Endothelial cell of umbilical vein (primary cell): ENCODE measurements at regions of chr2 and their contacts with region 1.

Region 1: DNA sequence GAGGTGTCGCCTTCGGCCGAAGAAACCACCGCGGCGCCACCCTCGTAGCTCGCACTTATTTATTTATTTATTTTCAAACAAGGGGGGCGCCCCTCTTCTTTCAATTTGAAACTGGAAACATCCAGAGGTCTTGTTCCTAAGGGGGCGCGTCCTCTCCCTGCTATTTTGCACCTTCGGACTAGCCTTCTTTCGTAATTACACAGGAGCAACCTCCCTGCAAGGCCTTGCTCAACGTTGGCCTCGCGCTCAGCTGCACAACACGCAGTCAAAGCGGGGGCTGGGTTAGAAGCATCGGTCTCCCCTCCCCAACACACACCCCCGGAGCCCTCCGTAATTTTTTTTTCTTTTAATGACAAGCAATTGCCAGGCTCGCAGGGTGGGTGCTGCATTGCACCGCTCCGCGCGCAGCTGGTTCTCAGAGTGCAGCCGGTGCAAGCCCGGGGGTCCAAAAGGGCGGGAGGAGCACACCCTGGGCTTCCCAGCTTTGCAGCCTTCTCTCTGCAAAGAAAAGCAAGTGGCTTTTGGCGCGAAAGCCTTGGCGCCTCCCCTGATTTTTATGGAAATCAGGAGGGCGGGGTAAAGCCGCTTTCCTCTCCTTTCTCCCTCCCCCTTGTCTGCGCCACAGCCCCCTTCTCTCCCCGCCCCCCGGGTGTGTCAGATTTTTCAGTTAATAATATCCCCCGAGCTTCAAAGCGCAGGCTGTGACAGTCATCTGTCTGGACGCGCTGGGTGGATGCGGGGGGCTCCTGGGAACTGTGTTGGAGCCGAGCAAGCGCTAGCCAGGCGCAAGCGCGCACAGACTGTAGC is at the start of gene MYCN:
- DNase-seq: peak; percentile 59
- H3K4me3 ChIP-seq: peak within 1 kb of the TSS in 2 of 3 experiments; percentile 2 to 47
- H3K27ac ChIP-seq: no peak within 1 kb of the TSS
- H3K4me1 ChIP-seq: peaks cover 13% of the 10 kb centered on the region
- H3K27me3 ChIP-seq: peaks cover 42 to 57% of the 10 kb centered on the region in 2 experiments
- CTCF ChIP-seq: no peak
- POLR2A ChIP-seq: no peak
- total RNA-seq, gene MYCN: 3.6 and 6.8 TPM in 2 replicates

Region 2: GRCh38 chr2:15704086-15704787 is 235.8 kb before region 1 on chr2:
- CTCF ChIA-PET with region 1: no interaction called
- POLR2A ChIA-PET with region 1: interaction called, 6 read pairs
- dilution Hi-C with region 1: no loop called
- intact Hi-C with region 1: loop called (anchors 2 kb)
- DNase-seq: peak; percentile 76
- H3K4me3 ChIP-seq: no peak overlapping the region
- H3K27ac ChIP-seq: peak overlapping the region; percentile 85
- H3K4me1 ChIP-seq: peaks cover 35% of the 10 kb centered on the region
- H3K27me3 ChIP-seq: no peaks in the 10 kb centered on the region
- CTCF ChIP-seq: no peak
- POLR2A ChIP-seq: no peak

Region 3: GRCh38 chr2:15912205-15912604 is 27.9 kb before region 1 on chr2:
- CTCF ChIA-PET with region 1: interaction called, 6 read pairs
- POLR2A ChIA-PET with region 1: no interaction called
- dilution Hi-C with region 1: no loop called
- intact Hi-C with region 1: loop called (anchors 1 kb)
- DNase-seq: peak; percentile 88
- H3K4me3 ChIP-seq: no peak overlapping the region
- H3K27ac ChIP-seq: no peak overlapping the region
- H3K4me1 ChIP-seq: no peaks in the 10 kb centered on the region
- H3K27me3 ChIP-seq: no peaks in the 10 kb centered on the region
- CTCF ChIP-seq: no peak
- POLR2A ChIP-seq: no peak

Region 4: GRCh38 chr2:15993232-15993610 is 53.2 kb after region 1 on chr2:
- CTCF ChIA-PET with region 1: no interaction called
- POLR2A ChIA-PET with region 1: no interaction called
- dilution Hi-C with region 1: no loop called
- intact Hi-C with region 1: no loop called
- DNase-seq: no peak
- H3K4me3 ChIP-seq: no peak overlapping the region
- H3K27ac ChIP-seq: no peak overlapping the region
- H3K4me1 ChIP-seq: no peaks in the 10 kb centered on the region
- H3K27me3 ChIP-seq: no peaks in the 10 kb centered on the region
- CTCF ChIP-seq: no peak
- POLR2A ChIP-seq: no peak

Region 5: GRCh38 chr2:16487686-16488085 is 547.6 kb after region 1 on chr2:
- CTCF ChIA-PET with region 1: interaction called, 9 read pairs
- POLR2A ChIA-PET with region 1: no interaction called
- dilution Hi-C with region 1: no loop called
- intact Hi-C with region 1: loop called (anchors 1 kb)
- DNase-seq: peak; percentile 46
- H3K4me3 ChIP-seq: no peak overlapping the region
- H3K27ac ChIP-seq: no peak overlapping the region
- H3K4me1 ChIP-seq: no peaks in the 10 kb centered on the region
- H3K27me3 ChIP-seq: no peaks in the 10 kb centered on the region
- CTCF ChIP-seq: peak; percentile 21 to 42
- POLR2A ChIP-seq: no peak

Region 6: DNA sequence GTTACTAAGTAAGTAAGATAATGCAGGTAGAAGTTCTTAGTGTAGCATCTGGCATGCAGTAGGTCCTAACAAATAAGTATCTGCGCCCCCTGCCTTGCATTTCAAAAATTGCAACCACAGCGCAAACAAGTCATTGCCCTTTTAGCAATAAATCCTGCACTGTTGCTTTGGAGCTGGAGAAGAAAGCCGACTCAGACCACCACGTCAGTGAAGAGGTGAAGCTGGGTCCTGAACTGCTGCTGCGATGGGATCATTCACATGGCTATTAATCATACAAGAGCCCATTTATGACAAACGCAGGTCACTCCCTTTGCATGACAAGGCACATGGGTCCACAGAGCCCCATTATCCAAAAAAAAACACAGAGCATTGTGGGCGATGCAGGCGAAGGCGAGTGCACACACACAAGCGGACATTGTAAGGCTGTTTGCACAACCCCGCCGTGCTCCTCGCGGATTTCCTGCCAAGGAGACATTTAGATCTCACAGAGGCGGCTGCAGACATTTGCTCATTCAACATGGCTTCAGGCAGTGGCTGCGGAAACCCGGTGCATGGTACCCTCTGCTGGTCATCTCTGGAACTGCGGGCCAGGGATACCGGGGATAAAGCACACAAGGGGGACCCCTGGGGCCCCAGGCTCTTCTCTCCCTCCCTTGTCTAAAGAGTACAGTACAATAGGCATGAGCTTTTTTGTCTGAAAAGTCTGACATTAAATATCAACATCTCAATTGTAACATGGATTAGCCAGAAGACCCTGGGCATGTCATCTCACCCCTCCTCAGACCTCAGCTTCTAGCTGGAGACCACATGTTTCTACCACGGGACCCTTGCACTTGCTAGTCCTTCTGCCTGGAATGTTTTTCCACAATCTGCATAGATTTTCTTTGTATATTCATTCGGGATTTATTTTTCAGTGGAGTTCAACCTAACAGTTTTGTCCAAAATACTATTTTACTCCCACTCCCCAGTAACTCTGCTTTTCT is 668.9 kb after region 1 on chr2:
- CTCF ChIA-PET with region 1: interaction called, 9 read pairs
- POLR2A ChIA-PET with region 1: no interaction called
- dilution Hi-C with region 1: no loop called
- intact Hi-C with region 1: loop called (anchors 2 kb)
- DNase-seq: peak; percentile 86
- H3K4me3 ChIP-seq: peak overlapping the region in 2 of 3 experiments; percentile 21 to 57
- H3K27ac ChIP-seq: peak overlapping the region; percentile 21
- H3K4me1 ChIP-seq: peaks cover 8% of the 10 kb centered on the region
- H3K27me3 ChIP-seq: no peaks in the 10 kb centered on the region
- CTCF ChIP-seq: peak; percentile 80 to 98
- POLR2A ChIP-seq: no peak